CD8-positive, alpha-beta T cell (primary cell): ENCODE measurements at regions of chr19 and their contacts with region 1.

Region 1: DNA sequence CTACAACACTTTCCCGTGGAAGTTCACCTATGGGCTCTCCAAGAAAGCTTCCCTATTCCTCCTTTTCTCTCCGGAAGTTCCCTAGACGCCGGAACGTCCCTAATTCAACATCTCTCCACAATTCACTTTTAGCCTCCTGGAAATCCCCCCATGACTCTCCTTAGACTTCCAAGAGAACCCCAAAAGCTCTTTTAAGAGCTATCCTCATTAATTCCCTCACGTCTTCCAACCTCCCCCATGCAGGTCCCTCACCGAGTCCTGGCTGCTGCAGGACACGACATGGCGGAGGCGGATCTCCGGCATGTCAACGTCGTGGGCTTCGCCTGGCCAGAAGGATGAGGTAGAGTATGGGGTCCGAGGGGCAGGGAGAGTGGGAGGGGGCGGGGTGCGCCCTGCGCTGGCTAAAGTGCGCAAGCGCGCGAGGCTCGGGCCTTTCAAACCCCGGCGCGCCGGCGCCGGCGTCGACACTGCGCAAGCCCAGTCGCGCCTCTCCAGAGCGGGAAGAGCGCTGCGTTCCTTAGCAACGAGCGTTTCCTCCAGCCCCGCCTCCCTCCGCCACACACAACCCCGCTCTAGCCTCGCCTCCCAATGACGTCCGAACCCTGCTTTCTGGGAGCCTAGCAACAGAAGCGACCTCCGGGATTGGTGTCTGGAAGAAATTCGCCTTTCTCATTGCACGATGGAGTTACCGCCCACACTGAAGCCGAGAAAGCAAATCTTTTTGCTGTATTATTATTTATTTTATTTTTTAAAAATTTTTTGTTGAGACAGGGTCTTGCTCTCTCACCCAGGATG is at the starts of genes PINLYP and XRCC1:
- DNase-seq: peak; percentile 93 to 100 (median 95)
- ATAC-seq: peak; percentile 96
- H3K4me3 ChIP-seq: peak within 1 kb of the TSS; percentile 87 to 98
- H3K4me3 Mint-ChIP-seq: peak within 1 kb of the TSS; percentile 95
- H3K27ac ChIP-seq: peak within 1 kb of the TSS; percentile 92 to 97
- H3K27ac Mint-ChIP-seq: peak within 1 kb of the TSS; percentile 96
- H3K4me1 ChIP-seq: peaks cover 29% of the 10 kb centered on the region
- H3K4me1 Mint-ChIP-seq: peaks cover 52% of the 10 kb centered on the region
- H3K27me3 ChIP-seq: no peaks in the 10 kb centered on the region
- H3K27me3 Mint-ChIP-seq: no peaks in the 10 kb centered on the region
- CTCF ChIP-seq: no peak
- total RNA-seq, gene PINLYP: 1.1 TPM
- total RNA-seq, gene XRCC1: 19.8 to 20.7 TPM

Region 2: DNA sequence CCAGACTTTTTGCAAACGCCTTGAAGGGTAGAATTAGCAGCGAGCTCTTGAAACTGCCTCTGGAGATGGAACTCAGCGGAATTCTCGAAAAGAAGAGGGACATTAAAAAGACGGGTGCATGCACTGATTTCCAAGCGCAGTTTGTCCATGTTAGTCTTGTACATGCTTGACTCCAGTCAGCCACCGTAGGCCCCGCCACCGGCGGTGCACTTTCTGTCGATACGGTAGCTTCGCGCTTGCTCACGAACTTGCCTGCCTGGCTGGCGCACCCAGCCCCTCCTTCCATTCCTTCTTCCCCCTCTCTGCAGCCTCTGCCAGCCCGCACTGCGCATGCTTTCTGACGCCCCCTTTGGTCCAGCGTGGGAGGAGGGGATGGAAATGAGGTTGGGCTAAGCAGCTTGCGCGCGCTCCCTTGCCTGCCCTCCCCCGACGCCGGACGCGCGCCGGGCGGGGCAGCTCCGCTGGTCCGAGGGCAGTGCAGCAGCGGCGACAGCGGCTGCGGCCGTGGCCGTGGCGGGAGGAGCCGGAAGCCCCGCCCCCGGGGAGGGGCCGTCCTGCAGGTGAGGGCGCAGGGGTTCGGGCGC is 42.3 kb before region 1 on chr19 and contains the start of gene ZNF575:
- CTCF ChIA-PET with region 1: interaction called, 8 read pairs
- POLR2A ChIA-PET with region 1: interaction called, 6 read pairs
- intact Hi-C with region 1: loop called in 1 of 2 experiments (anchors 1 kb)
- DNase-seq: peak; percentile 63 to 94 (median 87)
- ATAC-seq: peak; percentile 43
- H3K4me3 ChIP-seq: peak within 1 kb of the TSS; percentile 65 to 79
- H3K4me3 Mint-ChIP-seq: peak within 1 kb of the TSS; percentile 98
- H3K27ac ChIP-seq: peak within 1 kb of the TSS; percentile 55 to 76
- H3K27ac Mint-ChIP-seq: peak within 1 kb of the TSS; percentile 97
- H3K4me1 ChIP-seq: peaks cover 7% of the 10 kb centered on the region
- H3K4me1 Mint-ChIP-seq: peaks cover 19% of the 10 kb centered on the region
- H3K27me3 ChIP-seq: no peaks in the 10 kb centered on the region
- H3K27me3 Mint-ChIP-seq: no peaks in the 10 kb centered on the region
- CTCF ChIP-seq: no peak
- total RNA-seq, gene ZNF575: 2.4 to 3.4 TPM

Region 3: DNA sequence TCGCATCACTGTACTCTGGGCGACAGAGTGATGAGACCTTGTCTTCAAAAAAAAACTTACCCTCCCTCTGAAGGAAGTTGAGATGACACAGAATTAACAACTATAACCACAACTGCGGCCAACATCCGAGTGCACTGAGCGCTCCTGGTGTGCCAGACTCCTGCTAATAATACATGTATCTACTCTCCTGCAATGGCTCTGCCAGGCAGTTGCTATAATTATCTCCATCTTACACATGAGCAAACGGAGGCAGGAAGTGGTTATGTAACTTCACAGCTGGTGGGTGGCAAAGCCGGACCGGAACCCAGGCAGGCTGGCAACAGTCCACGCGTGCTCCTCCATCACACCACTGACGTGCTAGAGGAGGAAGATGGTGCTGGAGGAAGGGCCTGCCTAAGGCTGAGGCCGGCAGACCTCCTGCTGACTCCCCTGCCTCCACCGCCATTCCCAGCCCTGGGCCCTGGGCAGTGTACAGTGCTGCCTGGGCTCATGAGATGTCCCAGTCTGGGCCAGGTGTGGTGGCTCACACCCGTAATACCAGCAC is 12.6 kb before region 1 on chr19:
- CTCF ChIA-PET with region 1: interaction called, 58 read pairs
- POLR2A ChIA-PET with region 1: interaction called, 4 read pairs
- intact Hi-C with region 1: loop called (anchors 1 kb)
- DNase-seq: peak; percentile 67 to 96 (median 82)
- ATAC-seq: peak; percentile 87
- H3K4me3 ChIP-seq: peak overlapping the region; percentile 10 to 30
- H3K4me3 Mint-ChIP-seq: peak overlapping the region; percentile 66
- H3K27ac ChIP-seq: peak overlapping the region; percentile 78 to 97
- H3K27ac Mint-ChIP-seq: peak overlapping the region; percentile 90
- H3K4me1 ChIP-seq: peaks cover 49% of the 10 kb centered on the region
- H3K4me1 Mint-ChIP-seq: peaks cover 54% of the 10 kb centered on the region
- H3K27me3 ChIP-seq: no peaks in the 10 kb centered on the region
- H3K27me3 Mint-ChIP-seq: no peaks in the 10 kb centered on the region
- CTCF ChIP-seq: no peak

Region 4: DNA sequence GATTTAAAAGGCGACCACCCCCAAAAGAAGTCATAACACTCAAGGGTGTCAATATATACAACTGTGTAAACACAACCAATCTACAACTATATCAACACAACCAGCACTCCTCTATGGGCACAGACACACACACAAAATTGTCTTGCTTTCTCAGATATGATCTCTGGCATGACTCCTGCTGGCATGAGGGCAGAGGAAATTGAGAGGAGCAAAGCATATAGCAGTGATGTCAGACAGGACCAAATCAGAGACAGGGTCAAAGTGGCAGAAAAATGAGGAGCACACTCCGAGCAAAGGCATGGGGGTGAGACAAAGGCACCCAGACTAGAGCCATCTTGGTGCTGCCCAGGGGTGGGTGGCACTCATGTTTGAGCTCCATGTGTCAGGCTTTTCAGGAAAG is 11.0 kb after region 1 on chr19:
- CTCF ChIA-PET with region 1: no interaction called
- POLR2A ChIA-PET with region 1: no interaction called
- intact Hi-C with region 1: no loop called
- DNase-seq: no peak
- ATAC-seq: no peak
- H3K4me3 ChIP-seq: no peak overlapping the region
- H3K4me3 Mint-ChIP-seq: no peak overlapping the region
- H3K27ac ChIP-seq: no peak overlapping the region
- H3K27ac Mint-ChIP-seq: no peak overlapping the region
- H3K4me1 ChIP-seq: peaks cover 10% of the 10 kb centered on the region
- H3K4me1 Mint-ChIP-seq: peaks cover 13% of the 10 kb centered on the region
- H3K27me3 ChIP-seq: no peaks in the 10 kb centered on the region
- H3K27me3 Mint-ChIP-seq: no peaks in the 10 kb centered on the region
- CTCF ChIP-seq: no peak

Region 5: DNA sequence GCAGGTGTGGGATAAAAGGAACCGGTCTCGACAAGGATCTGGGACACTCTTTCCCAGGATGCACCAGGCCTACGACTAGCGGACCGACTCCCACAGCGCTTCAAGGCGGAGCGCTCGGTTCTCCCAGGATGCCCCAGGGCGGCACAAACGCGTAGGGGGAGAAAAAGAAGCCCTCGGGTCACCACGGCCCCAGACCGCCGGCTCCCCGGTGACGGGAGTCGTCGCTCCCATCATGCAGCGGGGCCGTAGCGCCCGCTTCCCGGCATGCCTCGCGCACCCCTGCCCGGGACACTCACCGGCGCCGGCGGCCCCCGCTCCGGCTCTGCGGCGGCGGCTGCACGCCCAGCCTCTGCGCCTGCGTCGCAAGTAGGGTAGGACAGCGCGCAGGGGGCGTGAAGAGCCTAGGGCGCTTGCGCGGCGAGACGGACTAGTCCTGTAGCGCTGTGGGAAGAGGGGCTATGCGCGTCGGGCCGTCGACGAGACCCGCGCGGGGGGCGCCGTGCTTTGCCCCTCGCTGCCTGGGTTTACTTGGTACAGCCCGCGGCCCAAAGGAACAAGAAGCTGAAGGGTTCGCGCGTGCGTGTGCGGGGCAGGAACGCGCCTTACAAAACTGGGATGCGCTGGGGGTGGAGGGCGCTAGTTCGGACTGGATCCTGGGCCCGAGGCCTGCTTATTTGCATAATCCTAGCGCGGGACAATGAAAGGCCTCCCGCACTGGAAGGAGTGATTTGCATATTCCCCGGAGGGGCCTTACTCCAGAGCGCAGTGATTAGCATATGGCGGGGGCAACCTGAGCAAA is 44.1 kb after region 1 on chr19 and contains the start of gene ZNF428:
- CTCF ChIA-PET with region 1: no interaction called
- POLR2A ChIA-PET with region 1: no interaction called
- intact Hi-C with region 1: loop called (anchors 1 kb)
- DNase-seq: peak; percentile 61 to 95 (median 86)
- ATAC-seq: peak; percentile 88
- H3K4me3 ChIP-seq: peak within 1 kb of the TSS; percentile 97 to 98
- H3K4me3 Mint-ChIP-seq: peak within 1 kb of the TSS; percentile 96
- H3K27ac ChIP-seq: peak within 1 kb of the TSS; percentile 78 to 90
- H3K27ac Mint-ChIP-seq: peak within 1 kb of the TSS; percentile 97
- H3K4me1 ChIP-seq: peaks cover 25% of the 10 kb centered on the region
- H3K4me1 Mint-ChIP-seq: peaks cover 32% of the 10 kb centered on the region
- H3K27me3 ChIP-seq: no peaks in the 10 kb centered on the region
- H3K27me3 Mint-ChIP-seq: no peaks in the 10 kb centered on the region
- CTCF ChIP-seq: no peak
- total RNA-seq, gene ZNF428: 31.8 to 33.3 TPM